A673 (cell line): ENCODE measurements at regions of chr1 and their contacts with region 1.

Region 1: GRCh38 chr1:17460245-17460644 is 20.8 kb upstream of the RCC2 start:
- DNase-seq: no peak
- H3K4me3 ChIP-seq: no peak overlapping the region
- H3K27ac ChIP-seq: no peak overlapping the region
- H3K4me1 ChIP-seq: no peaks in the 10 kb centered on the region
- H3K27me3 ChIP-seq: no peaks in the 10 kb centered on the region
- CTCF ChIP-seq: no peak

Region 2: DNA sequence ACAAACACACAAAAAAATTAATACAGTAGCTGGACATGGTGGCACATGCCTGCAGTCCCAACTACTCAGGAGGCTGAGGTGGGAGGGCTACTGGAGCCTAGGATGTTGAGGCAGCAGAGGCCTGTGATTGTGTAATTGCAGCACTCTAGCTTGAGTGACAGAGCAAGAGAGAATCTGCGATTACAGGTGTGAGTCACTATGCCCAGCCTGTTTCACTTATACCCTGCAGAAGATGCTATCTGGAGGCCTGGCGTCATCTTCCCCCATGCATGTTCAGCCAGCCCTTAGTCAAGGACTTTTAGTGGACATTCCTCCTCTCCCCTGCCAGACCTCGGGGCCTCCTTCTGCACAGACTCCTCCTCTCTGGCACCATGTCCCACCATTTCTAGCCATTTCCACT is 15.5 kb after region 1 on chr1:
- CTCF ChIA-PET with region 1: interaction called, 11 read pairs
- POLR2A ChIA-PET with region 1: no interaction called
- intact Hi-C with region 1: no loop called
- DNase-seq: no peak
- H3K4me3 ChIP-seq: no peak overlapping the region
- H3K27ac ChIP-seq: no peak overlapping the region
- H3K4me1 ChIP-seq: no peaks in the 10 kb centered on the region
- H3K27me3 ChIP-seq: no peaks in the 10 kb centered on the region
- CTCF ChIP-seq: no peak

Region 3: GRCh38 chr1:17488995-17489767 is 28.9 kb after region 1 on chr1:
- CTCF ChIA-PET with region 1: no interaction called
- POLR2A ChIA-PET with region 1: no interaction called
- intact Hi-C with region 1: no loop called
- DNase-seq: no peak
- H3K4me3 ChIP-seq: no peak overlapping the region
- H3K27ac ChIP-seq: no peak overlapping the region
- H3K4me1 ChIP-seq: peaks cover 4% of the 10 kb centered on the region
- H3K27me3 ChIP-seq: no peaks in the 10 kb centered on the region
- CTCF ChIP-seq: no peak